ENCODE measurements at regions of chr15 and their contacts with region 1.

Region 1: GRCh38 chr15:90954712-90955671 is at the start of gene RCCD1:
- DNase-seq: peak; percentile 92
- H3K4me3 ChIP-seq: peak within 1 kb of the TSS; percentile 32 to 67 (median 63)
- H3K27ac ChIP-seq: peak within 1 kb of the TSS; percentile 96
- H3K4me1 ChIP-seq: peaks cover 13% of the 10 kb centered on the region
- H3K27me3 ChIP-seq: no peaks in the 10 kb centered on the region
- CTCF ChIP-seq: no peak
- POLR2A ChIP-seq: peak; percentile 89
- total RNA-seq, gene RCCD1: 13.3 and 15.3 TPM in 2 replicates

Region 2: DNA sequence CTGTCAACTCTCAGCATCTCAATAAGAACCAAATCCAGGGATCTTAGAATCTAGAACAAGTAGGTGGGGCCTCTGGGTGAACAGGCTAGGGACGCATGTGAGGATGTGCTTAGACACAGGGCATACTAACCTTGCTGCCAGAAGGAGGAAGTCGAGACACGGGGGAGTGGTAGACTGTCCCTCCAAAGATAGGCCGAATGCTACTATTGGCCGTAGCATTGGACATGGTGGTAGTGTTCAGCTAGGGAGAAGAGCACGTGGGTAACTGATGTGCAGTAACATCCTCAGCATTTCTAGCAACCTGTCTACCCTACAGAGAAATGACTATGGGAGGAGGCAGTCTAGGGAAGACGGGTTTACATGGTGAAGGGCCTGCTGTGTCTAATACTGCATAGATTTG is 15.3 kb after region 1 on chr15:
- CTCF ChIA-PET with region 1: interaction called, 29 read pairs
- POLR2A ChIA-PET with region 1: no interaction called
- dilution Hi-C with region 1: no loop called
- intact Hi-C with region 1: no loop called
- DNase-seq: no peak
- H3K4me3 ChIP-seq: no peak overlapping the region
- H3K27ac ChIP-seq: no peak overlapping the region
- H3K4me1 ChIP-seq: no peaks in the 10 kb centered on the region
- H3K27me3 ChIP-seq: no peaks in the 10 kb centered on the region
- CTCF ChIP-seq: no peak
- POLR2A ChIP-seq: no peak

Region 3: DNA sequence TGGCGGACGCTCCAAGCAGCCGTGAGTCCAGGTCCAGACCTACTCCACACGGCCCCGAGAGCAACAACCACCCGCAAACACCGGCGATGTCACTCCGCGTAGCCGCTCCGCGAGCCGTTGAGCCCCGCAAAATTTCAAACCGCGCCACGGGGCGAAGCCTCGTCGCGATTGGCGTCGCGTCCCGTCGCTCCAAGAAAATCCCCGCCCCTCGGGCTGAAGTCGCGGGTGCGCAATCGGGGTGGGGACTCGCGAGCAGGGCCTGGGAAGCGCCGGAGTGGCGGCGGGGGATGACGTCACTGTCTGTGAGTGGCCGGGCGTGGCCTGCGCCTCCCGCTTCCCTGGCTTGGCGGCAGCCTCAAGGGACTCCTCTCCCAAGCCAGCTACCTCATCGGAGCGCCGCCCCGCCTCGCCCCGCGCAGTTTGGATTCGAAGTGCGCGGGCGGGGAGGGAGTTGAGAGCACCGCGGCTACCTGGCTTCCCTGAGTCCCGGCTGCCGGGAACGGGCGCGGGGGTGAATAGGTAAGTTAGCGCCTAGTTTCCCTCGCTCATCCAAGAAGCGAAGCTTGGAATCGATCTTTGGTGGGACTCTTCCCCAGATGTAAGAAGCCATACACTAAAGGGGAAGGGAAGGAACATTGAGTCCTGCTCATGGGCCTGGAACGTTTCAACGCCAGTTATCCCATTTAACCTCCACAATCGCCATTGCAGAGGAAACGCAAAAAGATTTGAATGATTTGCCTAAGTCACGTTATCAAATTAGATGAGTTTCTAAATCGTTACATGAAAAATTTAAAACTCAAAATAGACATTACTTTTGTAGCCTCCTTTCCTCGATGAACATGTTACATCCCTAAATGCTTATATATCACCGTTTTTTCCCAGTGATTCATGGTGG is 39.7 kb after region 1 on chr15 and contains the start of gene PRC1:
- CTCF ChIA-PET with region 1: interaction called, 23 read pairs
- POLR2A ChIA-PET with region 1: interaction called, 5 read pairs
- dilution Hi-C with region 1: no loop called
- intact Hi-C with region 1: loop called (anchors 1 kb)
- DNase-seq: peak; percentile 99
- H3K4me3 ChIP-seq: peak within 1 kb of the TSS; percentile 71 to 98 (median 93)
- H3K27ac ChIP-seq: peak within 1 kb of the TSS; percentile 94
- H3K4me1 ChIP-seq: peaks cover 20% of the 10 kb centered on the region
- H3K27me3 ChIP-seq: no peaks in the 10 kb centered on the region
- CTCF ChIP-seq: no peak
- POLR2A ChIP-seq: peak; percentile 42
- total RNA-seq, gene PRC1: 171 and 185 TPM in 2 replicates

Region 4: DNA sequence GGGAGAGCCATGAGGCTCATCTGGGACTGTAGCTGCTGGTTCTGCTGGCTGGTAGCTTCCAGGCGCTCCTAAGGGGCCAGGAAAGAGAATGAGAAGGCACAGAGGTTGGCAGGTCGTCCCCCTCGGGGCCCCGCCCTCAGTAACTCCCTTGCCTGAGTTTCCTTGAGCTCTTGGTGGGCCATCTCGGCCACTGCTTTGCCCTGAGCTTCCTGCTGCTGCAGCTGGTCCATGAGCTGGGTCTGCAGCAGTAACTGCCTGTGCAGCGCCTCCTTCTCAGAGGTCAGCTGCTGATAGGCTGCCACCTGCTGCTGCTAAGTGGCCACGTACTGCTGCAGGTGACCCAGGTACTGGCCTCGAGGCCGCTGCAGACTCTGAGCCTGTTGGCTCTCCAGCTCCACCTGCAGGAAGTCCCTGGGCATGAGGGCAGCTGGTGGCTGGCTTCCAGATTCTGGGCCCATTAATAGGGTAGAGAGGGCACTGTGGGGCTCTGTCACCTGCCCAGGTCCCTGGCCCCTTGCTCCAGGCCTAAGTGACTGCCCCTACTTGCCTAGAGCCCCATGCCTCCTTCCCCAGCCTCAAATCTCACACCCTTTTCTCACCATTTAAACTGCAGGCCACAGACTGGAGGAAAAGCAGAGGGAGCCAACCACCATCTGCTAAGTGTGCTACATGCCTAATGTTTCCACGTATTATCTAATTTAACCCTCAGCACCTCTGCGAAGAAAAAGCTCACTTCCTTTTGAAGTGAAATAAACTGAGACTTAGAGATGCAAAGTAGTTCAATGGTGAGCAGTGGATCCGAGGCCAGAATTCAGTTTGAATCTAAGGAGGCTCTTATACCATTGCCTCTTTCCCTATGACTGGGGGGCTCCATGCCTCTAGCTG is 78.2 kb after region 1 on chr15:
- CTCF ChIA-PET with region 1: interaction called, 77 read pairs
- POLR2A ChIA-PET with region 1: no interaction called
- dilution Hi-C with region 1: no loop called
- intact Hi-C with region 1: loop called (anchors 1 kb)
- DNase-seq: peak; percentile 29
- H3K4me3 ChIP-seq: no peak overlapping the region
- H3K27ac ChIP-seq: no peak overlapping the region
- H3K4me1 ChIP-seq: no peaks in the 10 kb centered on the region
- H3K27me3 ChIP-seq: peaks cover 0 to 4% of the 10 kb centered on the region in 2 experiments
- CTCF ChIP-seq: peak; percentile 42 to 76
- POLR2A ChIP-seq: no peak

Region 5: GRCh38 chr15:91055548-91056331 is 100.7 kb after region 1 on chr15:
- CTCF ChIA-PET with region 1: interaction called, 95 read pairs
- POLR2A ChIA-PET with region 1: no interaction called
- dilution Hi-C with region 1: no loop called
- intact Hi-C with region 1: no loop called
- DNase-seq: peak; percentile 47
- H3K4me3 ChIP-seq: no peak overlapping the region
- H3K27ac ChIP-seq: no peak overlapping the region
- H3K4me1 ChIP-seq: no peaks in the 10 kb centered on the region
- H3K27me3 ChIP-seq: peaks cover 17 to 31% of the 10 kb centered on the region in 2 experiments
- CTCF ChIP-seq: peak; percentile 59 to 73
- POLR2A ChIP-seq: no peak